PC-9 (cell line): ENCODE measurements at regions of chr2 and their contacts with region 1.

Region 1: DNA sequence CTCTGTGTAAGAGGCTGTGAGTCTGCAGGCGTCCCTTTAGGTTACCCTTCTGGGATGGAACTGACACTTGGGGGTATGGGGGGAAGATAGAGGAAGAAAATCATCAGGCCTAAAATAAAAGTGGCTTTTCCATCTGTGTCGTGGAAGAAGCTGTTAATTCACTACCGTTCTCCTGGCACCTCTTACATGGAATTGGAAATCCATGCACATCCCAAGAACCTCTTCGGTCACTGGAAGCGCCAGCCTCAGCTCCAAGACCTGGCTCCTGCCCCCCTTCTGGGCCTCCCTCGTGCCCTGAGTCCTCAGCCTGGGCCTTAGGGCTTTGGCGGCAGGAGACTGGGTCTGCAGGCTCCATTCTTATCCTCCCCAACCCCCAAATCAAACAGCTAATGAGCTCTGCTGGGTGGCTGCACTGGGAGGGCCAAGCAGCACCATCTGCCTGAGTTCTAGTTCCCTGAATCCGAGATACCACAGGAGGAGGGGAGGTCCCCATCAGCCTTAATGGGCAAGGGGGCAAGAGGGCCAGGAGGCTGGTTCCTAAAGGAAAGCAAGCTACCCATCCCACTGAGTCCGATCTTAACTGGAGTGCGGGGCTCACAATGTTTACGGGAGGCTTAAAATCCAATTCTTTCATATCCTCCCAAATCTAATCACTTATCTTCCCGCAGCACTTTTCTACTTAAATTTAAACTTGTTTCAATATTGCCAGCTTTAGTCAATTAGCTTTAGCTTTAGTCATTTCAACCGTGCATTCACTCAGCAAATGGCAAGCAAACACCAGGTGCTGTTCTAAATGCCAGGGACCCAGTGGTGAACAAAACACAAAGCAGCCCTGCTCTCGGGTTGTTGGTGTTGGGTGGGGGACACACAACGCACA is 52.8 kb downstream of the FAM178B start:
- DNase-seq: no peak
- H3K4me3 ChIP-seq: no peak overlapping the region
- H3K27ac ChIP-seq: no peak overlapping the region
- H3K4me1 ChIP-seq: peaks cover 6% of the 10 kb centered on the region; the same call in 1 of the 2 replicates
- H3K27me3 ChIP-seq: no peaks in the 10 kb centered on the region
- CTCF ChIP-seq: no peak

Region 2: DNA sequence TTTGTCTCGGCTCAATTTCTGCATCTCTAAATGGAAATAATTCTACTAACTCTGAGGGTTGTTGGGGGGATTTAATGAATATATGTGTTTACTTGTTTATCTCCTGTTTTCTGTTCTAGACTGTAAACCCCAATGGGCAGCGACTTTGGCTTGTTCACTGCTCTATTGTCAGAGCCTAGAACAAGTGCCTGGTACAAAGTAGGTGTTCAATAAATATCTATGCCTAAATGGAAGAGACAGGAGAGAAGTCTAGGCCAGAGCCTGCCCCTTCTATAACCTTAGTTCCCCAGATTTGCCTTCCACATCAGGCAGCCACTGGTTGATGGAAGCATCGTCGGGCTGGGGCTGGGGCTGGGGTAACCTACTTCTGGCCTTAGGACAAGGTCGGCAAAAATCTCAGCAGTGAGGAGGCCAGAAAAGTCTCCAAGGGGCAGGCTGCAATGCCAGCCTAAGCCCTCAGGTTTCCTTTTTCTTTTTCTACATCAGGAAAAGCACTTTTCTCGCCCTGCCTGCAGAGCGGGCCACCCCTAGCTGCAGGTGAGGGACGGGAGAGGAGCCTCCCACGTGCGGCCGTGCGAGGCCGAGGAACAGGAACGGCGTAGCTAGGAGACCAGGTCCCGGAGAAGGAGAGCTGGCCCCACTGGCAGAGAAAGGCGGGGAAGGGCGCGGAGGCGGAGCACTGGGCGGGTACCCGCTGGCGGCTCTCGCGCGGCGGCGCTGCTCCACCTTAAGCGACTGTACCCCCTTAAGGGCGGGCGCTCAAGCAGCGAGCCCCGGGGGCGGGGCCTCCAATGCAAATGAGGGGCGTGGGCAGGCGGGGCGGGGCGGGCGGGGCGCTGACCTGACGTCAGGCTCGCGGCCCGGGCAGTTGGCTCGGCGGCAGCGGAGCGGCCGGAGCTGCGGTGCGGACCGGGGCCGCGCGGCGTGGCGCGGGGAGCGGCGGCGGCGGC is 173.2 kb before region 1 on chr2 and contains the start of gene CNNM4:
- CTCF ChIA-PET with region 1: no interaction called
- POLR2A ChIA-PET with region 1: no interaction called
- intact Hi-C with region 1: no loop called
- DNase-seq: peak; percentile 90 to 98
- H3K4me3 ChIP-seq: peak within 1 kb of the TSS; percentile 87
- H3K27ac ChIP-seq: no peak within 1 kb of the TSS; the same call in 1 of the 2 replicates
- H3K4me1 ChIP-seq: peaks cover 47% of the 10 kb centered on the region
- H3K27me3 ChIP-seq: no peaks in the 10 kb centered on the region
- CTCF ChIP-seq: no peak
- total RNA-seq, gene CNNM4: 28.2 and 31.4 TPM in 2 replicates

Region 3: DNA sequence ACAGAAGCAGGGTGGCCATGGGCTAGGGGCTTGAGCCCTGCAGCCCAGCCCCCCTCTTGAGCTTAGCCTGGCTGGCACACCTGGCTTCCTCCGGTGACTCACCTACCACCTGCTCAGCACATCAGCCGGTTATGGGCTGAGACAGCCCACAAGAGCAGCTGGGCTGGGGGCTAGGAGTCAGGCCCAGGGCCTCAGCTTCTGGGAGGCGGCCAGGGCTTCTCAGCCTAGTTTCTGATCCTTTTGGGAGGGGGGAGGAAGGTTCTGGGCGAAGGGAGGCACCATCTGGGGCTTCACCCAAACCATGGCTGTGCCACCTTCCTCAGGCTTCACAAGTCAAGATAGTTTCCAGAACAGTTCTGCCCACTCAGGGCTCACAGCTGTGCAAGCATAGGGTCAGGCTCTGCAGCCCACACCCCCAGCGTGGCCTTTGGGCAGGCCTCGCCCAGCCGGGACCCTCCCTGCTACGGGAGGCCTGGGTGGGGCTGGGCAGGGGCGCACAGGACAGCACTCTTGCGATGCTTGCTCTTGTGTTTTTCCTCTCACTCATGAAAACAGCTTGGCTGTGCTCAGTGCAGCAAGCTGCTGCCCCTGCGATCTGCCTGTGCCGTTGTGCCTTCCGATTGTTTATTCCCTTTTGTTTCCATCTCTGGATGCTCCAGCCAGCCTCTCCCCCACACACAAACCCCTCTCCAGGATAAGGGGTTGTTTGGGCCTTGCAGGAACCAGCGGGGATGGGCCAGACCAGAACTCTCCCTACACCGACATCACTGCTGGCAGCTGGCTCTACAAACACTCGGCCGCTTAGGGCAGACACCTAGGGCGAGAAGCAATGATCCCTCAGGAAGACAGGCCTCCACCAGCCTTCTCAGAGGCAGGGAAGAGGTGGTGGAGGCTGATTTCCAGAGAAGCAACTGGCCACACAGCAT is 37.6 kb before region 1 on chr2:
- CTCF ChIA-PET with region 1: no interaction called
- POLR2A ChIA-PET with region 1: interaction called, 4 read pairs
- intact Hi-C with region 1: loop called (anchors 5 kb)
- DNase-seq: peak in 1 of 2 experiments; percentile 80
- H3K4me3 ChIP-seq: no peak overlapping the region
- H3K27ac ChIP-seq: 0 out of 2 replicates have a peak overlapping the region, but pooled peaks have one; percentile 7
- H3K4me1 ChIP-seq: peaks cover 58% of the 10 kb centered on the region
- H3K27me3 ChIP-seq: no peaks in the 10 kb centered on the region
- CTCF ChIP-seq: no peak

Region 4: GRCh38 chr2:96977631-96978195 is 44.2 kb after region 1 on chr2:
- CTCF ChIA-PET with region 1: no interaction called
- POLR2A ChIA-PET with region 1: interaction called, 10 read pairs
- intact Hi-C with region 1: no loop called
- DNase-seq: no peak
- H3K4me3 ChIP-seq: no peak overlapping the region
- H3K27ac ChIP-seq: no peak overlapping the region
- H3K4me1 ChIP-seq: no peaks in the 10 kb centered on the region
- H3K27me3 ChIP-seq: peaks cover 43% of the 10 kb centered on the region
- CTCF ChIP-seq: no peak